Mammary epithelial cell (primary cell): ENCODE measurements at regions of chr9 and their contacts with region 1.

Region 1: GRCh38 chr9:130220352-130220751 is 45.2 kb upstream of the HMCN2 start:
- DNase-seq: no peak
- H3K4me3 ChIP-seq: no peak overlapping the region
- H3K27ac ChIP-seq: no peak overlapping the region
- H3K4me1 ChIP-seq: peaks cover 8% of the 10 kb centered on the region
- H3K27me3 ChIP-seq: no peaks in the 10 kb centered on the region
- CTCF ChIP-seq: no peak

Region 2: DNA sequence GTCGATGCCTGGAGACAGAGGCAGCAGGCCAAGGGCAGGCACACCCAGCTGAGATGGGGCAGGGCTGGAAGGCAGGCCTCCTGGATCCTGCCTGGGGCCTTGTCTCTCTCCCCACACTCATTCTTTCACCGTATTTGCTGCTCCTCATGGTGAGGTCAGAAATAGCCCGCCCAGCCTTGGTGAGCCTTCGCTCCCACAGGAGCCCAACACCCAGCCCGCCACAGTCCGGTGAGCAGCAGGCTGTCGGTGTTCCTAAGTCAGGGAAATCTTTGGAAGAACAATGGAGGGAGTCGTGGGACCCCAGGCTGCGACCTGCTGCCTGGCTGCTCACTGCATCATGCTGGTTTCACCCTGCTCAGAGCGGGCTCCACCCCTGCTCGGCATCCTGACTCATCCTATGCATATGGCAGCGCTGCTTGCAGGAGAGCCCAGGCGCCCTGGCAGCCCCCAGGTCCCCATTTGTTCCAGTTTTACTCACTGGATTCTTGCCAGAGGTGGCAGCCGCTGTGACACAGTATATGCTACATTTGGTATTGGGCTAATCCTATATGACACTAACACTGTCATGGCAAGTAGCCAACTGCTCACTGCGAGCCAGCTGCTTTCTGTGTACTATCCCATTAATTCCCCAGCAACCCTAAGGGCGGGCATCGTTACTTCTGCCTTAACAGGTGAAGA is 101.4 kb before region 1 on chr9:
- CTCF ChIA-PET with region 1: no interaction called
- dilution Hi-C with region 1: no loop called
- in situ Hi-C with region 1: loop called in 1 of 2 experiments (anchors 10 kb)
- intact Hi-C with region 1: no loop called
- DNase-seq: no peak
- H3K4me3 ChIP-seq: no peak overlapping the region
- H3K27ac ChIP-seq: no peak overlapping the region
- H3K4me1 ChIP-seq: peaks cover 11% of the 10 kb centered on the region
- H3K27me3 ChIP-seq: no peaks in the 10 kb centered on the region
- CTCF ChIP-seq: no peak

Region 3: GRCh38 chr9:130199605-130200004 is 20.7 kb before region 1 on chr9:
- CTCF ChIA-PET with region 1: no interaction called
- dilution Hi-C with region 1: no loop called
- in situ Hi-C with region 1: no loop called
- intact Hi-C with region 1: loop called (anchors 2 kb)
- DNase-seq: peak; percentile 78
- H3K4me3 ChIP-seq: no peak overlapping the region
- H3K27ac ChIP-seq: no peak overlapping the region
- H3K4me1 ChIP-seq: peaks cover 53% of the 10 kb centered on the region
- H3K27me3 ChIP-seq: no peaks in the 10 kb centered on the region
- CTCF ChIP-seq: no peak